ENCODE measurements at regions of chr12 and their contacts with region 1.

Region 1: GRCh38 chr12:31959161-31959700 is at the start of gene RESF1:
- H3K4me3 Mint-ChIP-seq: peak within 1 kb of the TSS; percentile 92
- H3K27ac Mint-ChIP-seq: peak within 1 kb of the TSS; percentile 98
- H3K4me1 Mint-ChIP-seq: peaks cover 46% of the 10 kb centered on the region
- H3K27me3 Mint-ChIP-seq: no peaks in the 10 kb centered on the region

Region 2: GRCh38 chr12:31874961-31875608 is 84.1 kb before region 1 on chr12:
- intact Hi-C with region 1: loop called (anchors 10 kb)
- H3K4me3 Mint-ChIP-seq: no peak overlapping the region
- H3K27ac Mint-ChIP-seq: peak overlapping the region; percentile 83
- H3K4me1 Mint-ChIP-seq: peaks cover 27% of the 10 kb centered on the region
- H3K27me3 Mint-ChIP-seq: no peaks in the 10 kb centered on the region

Region 3: GRCh38 chr12:31906557-31907301 is 52.5 kb before region 1 on chr12:
- intact Hi-C with region 1: loop called (anchors 10 kb)
- H3K4me3 Mint-ChIP-seq: peak overlapping the region; percentile 42
- H3K27ac Mint-ChIP-seq: peak overlapping the region; percentile 99
- H3K4me1 Mint-ChIP-seq: peaks cover 39% of the 10 kb centered on the region
- H3K27me3 Mint-ChIP-seq: no peaks in the 10 kb centered on the region